ENCODE measurements at regions of chr19 and their contacts with region 1.

Region 1: GRCh38 chr19:43489310-43489709 is 15.2 kb downstream of the PHLDB3 start:
- DNase-seq: no peak
- H3K4me3 ChIP-seq: no peak overlapping the region
- H3K27ac ChIP-seq: no peak overlapping the region
- H3K4me1 ChIP-seq: no peaks in the 10 kb centered on the region
- H3K27me3 ChIP-seq: no peaks in the 10 kb centered on the region
- CTCF ChIP-seq: no peak

Region 2: GRCh38 chr19:43446746-43447489 is 42.4 kb before region 1 on chr19:
- CTCF ChIA-PET with region 1: no interaction called
- POLR2A ChIA-PET with region 1: no interaction called
- intact Hi-C with region 1: no loop called
- DNase-seq: peak; percentile 67 to 71
- H3K4me3 ChIP-seq: no peak overlapping the region
- H3K27ac ChIP-seq: no peak overlapping the region
- H3K4me1 ChIP-seq: peaks cover 6% of the 10 kb centered on the region; the same call in 1 of the 2 replicates
- H3K27me3 ChIP-seq: no peaks in the 10 kb centered on the region
- CTCF ChIP-seq: peak; percentile 94

Region 3: GRCh38 chr19:43526884-43527859 is 37.9 kb after region 1 on chr19 and contains the start of gene ETHE1:
- CTCF ChIA-PET with region 1: no interaction called
- POLR2A ChIA-PET with region 1: no interaction called
- intact Hi-C with region 1: no loop called
- DNase-seq: peak; percentile 37 to 81
- H3K4me3 ChIP-seq: peak within 1 kb of the TSS; percentile 97
- H3K27ac ChIP-seq: peak within 1 kb of the TSS; percentile 46
- H3K4me1 ChIP-seq: peaks cover 59% of the 10 kb centered on the region
- H3K27me3 ChIP-seq: no peaks in the 10 kb centered on the region
- CTCF ChIP-seq: no peak
- total RNA-seq, gene ETHE1: 83.4 and 89.3 TPM in 2 replicates

Region 4: DNA sequence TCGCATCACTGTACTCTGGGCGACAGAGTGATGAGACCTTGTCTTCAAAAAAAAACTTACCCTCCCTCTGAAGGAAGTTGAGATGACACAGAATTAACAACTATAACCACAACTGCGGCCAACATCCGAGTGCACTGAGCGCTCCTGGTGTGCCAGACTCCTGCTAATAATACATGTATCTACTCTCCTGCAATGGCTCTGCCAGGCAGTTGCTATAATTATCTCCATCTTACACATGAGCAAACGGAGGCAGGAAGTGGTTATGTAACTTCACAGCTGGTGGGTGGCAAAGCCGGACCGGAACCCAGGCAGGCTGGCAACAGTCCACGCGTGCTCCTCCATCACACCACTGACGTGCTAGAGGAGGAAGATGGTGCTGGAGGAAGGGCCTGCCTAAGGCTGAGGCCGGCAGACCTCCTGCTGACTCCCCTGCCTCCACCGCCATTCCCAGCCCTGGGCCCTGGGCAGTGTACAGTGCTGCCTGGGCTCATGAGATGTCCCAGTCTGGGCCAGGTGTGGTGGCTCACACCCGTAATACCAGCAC is 73.5 kb after region 1 on chr19:
- CTCF ChIA-PET with region 1: no interaction called
- POLR2A ChIA-PET with region 1: interaction called, 12 read pairs
- intact Hi-C with region 1: no loop called
- DNase-seq: no peak
- H3K4me3 ChIP-seq: no peak overlapping the region
- H3K27ac ChIP-seq: no peak overlapping the region
- H3K4me1 ChIP-seq: no peaks in the 10 kb centered on the region
- H3K27me3 ChIP-seq: no peaks in the 10 kb centered on the region
- CTCF ChIP-seq: no peak

Region 5: GRCh38 chr19:43895727-43896126 is 406.4 kb after region 1 on chr19:
- CTCF ChIA-PET with region 1: no interaction called
- POLR2A ChIA-PET with region 1: no interaction called
- intact Hi-C with region 1: no loop called
- DNase-seq: no peak
- H3K4me3 ChIP-seq: no peak overlapping the region
- H3K27ac ChIP-seq: no peak overlapping the region
- H3K4me1 ChIP-seq: no peaks in the 10 kb centered on the region
- H3K27me3 ChIP-seq: no peaks in the 10 kb centered on the region
- CTCF ChIP-seq: no peak